Right ventricle myocardium inferior (tissue), 1 donor: ENCODE measurements at regions of chr11 and their contacts with region 1.

Region 1: GRCh38 chr11:33065445-33066178 is 26.2 kb downstream of the TCP11L1 start:
- DNase-seq: peak; percentile 86
- ATAC-seq: peak; percentile 73

Region 2: GRCh38 chr11:32809313-32809712 is 256.3 kb before region 1 on chr11:
- intact Hi-C with region 1: loop called (anchors 10 kb)
- DNase-seq: peak; percentile 76
- ATAC-seq: peak; percentile 75

Region 3: DNA sequence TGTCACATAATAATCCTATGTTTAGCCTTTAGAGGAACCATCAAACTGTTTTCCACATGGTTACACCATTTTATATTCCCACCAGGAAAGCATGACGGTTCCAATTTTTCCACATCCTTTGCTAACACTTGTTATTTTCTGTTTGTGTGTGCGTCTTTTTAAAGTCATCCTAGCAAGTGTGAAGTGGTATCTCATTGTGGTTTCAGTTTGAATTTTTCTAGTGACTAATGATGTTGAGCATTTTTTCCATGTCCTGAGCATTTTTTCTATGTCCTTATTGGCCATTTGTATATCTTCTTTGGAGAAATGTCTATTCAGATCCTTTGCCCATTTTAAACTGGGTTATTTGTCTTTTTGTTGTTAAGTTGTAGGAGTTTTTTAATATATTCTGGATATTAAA is 103.6 kb before region 1 on chr11:
- intact Hi-C with region 1: loop called (anchors 2 kb)
- DNase-seq: no peak
- ATAC-seq: no peak